ENCODE measurements at regions of chr1 and their contacts with region 1.

Region 1: GRCh38 chr1:17892225-17892624 is 137.1 kb downstream of the ACTL8 start:
- DNase-seq: peak; percentile 76
- ATAC-seq: peak; percentile 77

Region 2: DNA sequence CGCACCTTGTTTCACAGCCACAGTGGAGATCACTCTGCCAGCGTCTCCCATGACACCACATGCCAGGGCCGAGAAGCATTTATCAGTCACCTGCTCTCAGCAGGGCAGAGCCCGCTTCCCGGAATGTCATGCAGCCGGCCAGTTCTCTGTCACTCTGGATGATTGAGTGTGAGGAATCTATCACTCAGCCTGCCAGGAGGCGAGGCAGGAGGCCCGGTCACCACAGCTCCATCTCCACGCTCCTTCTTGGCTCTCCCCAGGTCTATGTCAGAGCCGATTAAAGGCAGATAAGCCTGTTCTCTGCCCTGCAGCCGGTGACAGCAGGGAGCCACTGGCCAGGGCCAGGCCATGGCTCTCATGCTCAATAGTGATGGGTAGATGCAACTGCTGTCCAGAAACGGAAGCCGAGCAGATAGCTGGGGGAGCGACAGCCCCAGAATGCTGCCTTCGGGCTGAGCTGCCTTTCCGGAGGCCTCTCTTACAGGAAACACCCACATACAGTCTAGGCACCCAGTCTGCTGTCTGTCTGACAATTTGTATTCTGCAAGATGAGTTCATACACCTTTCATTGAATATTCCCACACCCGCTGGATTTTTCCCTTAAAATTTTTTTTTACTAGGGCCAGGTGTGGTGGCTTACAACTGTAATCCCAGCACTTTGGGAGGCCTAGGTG is 73.0 kb before region 1 on chr1:
- intact Hi-C with region 1: loop called (anchors 5 kb)
- DNase-seq: peak; percentile 65
- ATAC-seq: peak; percentile 95

Region 3: DNA sequence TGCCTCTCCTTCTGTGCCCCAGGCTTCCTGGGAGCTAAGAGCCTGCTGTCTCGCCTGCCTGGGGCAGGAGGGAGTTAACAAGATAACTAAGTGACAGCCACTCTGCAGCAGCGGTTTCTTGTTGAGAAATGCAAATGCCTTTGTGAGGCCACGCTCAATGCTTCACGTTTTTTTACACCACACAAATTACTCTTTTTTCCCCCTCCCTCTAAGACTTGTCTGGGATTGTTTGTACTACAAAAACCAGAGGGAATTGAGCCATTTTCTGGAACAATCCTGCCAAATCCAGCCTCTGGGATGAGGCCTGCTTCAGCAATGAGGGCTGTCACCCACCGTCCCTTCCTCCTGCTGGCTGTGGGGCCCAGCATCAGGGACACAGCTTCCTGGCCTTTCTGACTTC is 17.5 kb before region 1 on chr1:
- intact Hi-C with region 1: loop called (anchors 2 kb)
- DNase-seq: no peak
- ATAC-seq: peak; percentile 29